HepG2 (cell line): ENCODE measurements at regions of chr2 and their contacts with region 1.

Region 1: GRCh38 chr2:39407516-39408296 is 29.4 kb downstream of the MAP4K3 start:
- DNase-seq: no peak
- ATAC-seq: peak; percentile 50; the same call in 2 of the 3 replicates
- H3K4me3 ChIP-seq: no peak overlapping the region
- H3K27ac ChIP-seq: peak overlapping the region; percentile 4
- H3K4me1 ChIP-seq: peaks cover 85% of the 10 kb centered on the region
- H3K27me3 ChIP-seq: no peaks in the 10 kb centered on the region
- CTCF ChIP-seq: no peak
- EP300 ChIP-seq: no peak
- POLR2A ChIP-seq: no peak
- RAD21 ChIP-seq: no peak

Region 2: GRCh38 chr2:39385172-39385571 is 22.5 kb before region 1 on chr2:
- CTCF ChIA-PET with region 1: no interaction called
- POLR2A ChIA-PET with region 1: no interaction called
- in situ Hi-C with region 1: no loop called
- intact Hi-C with region 1: loop called (anchors 2 kb)
- DNase-seq: no peak
- ATAC-seq: no peak
- H3K4me3 ChIP-seq: no peak overlapping the region
- H3K27ac ChIP-seq: no peak overlapping the region
- H3K4me1 ChIP-seq: peaks cover 40% of the 10 kb centered on the region
- H3K27me3 ChIP-seq: no peaks in the 10 kb centered on the region
- CTCF ChIP-seq: no peak
- EP300 ChIP-seq: no peak
- POLR2A ChIP-seq: no peak
- RAD21 ChIP-seq: no peak

Region 3: DNA sequence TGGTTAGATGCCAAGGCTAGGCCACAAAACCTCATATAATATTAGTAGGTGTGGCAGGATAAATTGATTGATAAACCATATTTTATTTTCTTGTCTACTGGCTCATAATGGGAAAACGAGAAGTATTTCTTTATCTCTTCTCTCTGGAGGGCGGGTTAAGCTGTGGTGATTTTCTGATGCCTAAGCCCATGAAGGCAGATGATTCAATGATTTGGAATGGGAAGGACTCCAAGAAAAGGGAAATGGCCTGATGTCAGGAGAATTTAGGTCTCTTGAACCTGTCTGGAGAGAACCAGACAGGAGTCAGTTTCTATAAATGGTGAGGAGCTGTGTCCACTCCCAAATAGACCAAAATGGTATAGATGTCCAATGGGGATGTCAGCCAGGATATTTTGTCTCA is 48.1 kb after region 1 on chr2:
- CTCF ChIA-PET with region 1: no interaction called
- POLR2A ChIA-PET with region 1: no interaction called
- in situ Hi-C with region 1: no loop called
- intact Hi-C with region 1: no loop called
- DNase-seq: no peak
- ATAC-seq: no peak
- H3K4me3 ChIP-seq: no peak overlapping the region
- H3K27ac ChIP-seq: no peak overlapping the region
- H3K4me1 ChIP-seq: peaks cover 7% of the 10 kb centered on the region
- H3K27me3 ChIP-seq: no peaks in the 10 kb centered on the region
- CTCF ChIP-seq: no peak
- EP300 ChIP-seq: no peak
- POLR2A ChIP-seq: no peak
- RAD21 ChIP-seq: no peak

Region 4: GRCh38 chr2:39530411-39530866 is 122.7 kb after region 1 on chr2:
- CTCF ChIA-PET with region 1: no interaction called
- POLR2A ChIA-PET with region 1: no interaction called
- in situ Hi-C with region 1: no loop called
- intact Hi-C with region 1: no loop called
- DNase-seq: no peak
- ATAC-seq: no peak
- H3K4me3 ChIP-seq: no peak overlapping the region
- H3K27ac ChIP-seq: no peak overlapping the region
- H3K4me1 ChIP-seq: peaks cover 47% of the 10 kb centered on the region
- H3K27me3 ChIP-seq: no peaks in the 10 kb centered on the region
- CTCF ChIP-seq: no peak
- EP300 ChIP-seq: no peak
- POLR2A ChIP-seq: no peak
- RAD21 ChIP-seq: no peak